IMR-90 (cell line): ENCODE measurements at regions of chrX and their contacts with region 1.

Region 1: DNA sequence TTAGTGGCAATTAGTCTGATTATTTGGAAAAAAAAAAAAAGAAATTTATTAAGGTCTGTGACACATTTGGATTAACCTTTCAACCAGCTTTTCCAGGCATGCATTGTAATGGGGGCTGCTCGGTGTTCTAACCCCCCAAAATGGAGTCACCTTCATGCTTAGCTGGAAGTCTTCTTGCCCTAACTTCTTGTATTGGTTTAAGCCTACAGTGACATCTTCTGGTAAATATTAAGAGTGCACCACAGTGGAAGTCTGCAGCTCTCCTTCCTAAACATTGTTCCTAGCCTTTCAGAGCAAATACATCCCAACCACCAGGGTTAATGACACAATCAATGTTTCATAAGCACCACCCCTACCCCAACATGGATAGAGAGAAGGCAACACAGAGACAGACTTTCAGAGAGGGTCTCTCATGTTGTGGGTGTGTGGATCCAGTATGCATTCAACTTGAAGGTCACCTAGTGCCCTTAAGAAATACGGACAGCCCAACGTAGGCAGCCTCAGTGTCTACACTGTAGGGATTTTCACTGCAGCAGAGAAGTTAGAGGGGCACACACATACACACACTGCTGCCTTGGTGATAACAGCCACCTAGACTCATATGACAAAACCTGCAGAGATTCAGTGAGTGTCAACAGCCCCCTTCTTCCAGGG is 142.9 kb upstream of the MBNL3 start:
- DNase-seq: peak; percentile 40
- ATAC-seq: peak; percentile 89
- H3K4me3 ChIP-seq: no peak overlapping the region
- H3K27ac ChIP-seq: no peak overlapping the region
- H3K4me1 ChIP-seq: no peaks in the 10 kb centered on the region
- H3K27me3 ChIP-seq: peaks cover 22% of the 10 kb centered on the region
- CTCF ChIP-seq: peak; percentile 62
- POLR2A ChIP-seq: no peak
- RAD21 ChIP-seq: peak; percentile 57

Region 2: GRCh38 chrX:131830400-131831184 is 801.1 kb before region 1 on chrX:
- CTCF ChIA-PET with region 1: no interaction called
- POLR2A ChIA-PET with region 1: no interaction called
- dilution Hi-C with region 1: no loop called
- in situ Hi-C with region 1: loop called (anchors 25 kb)
- intact Hi-C with region 1: no loop called
- DNase-seq: peak; percentile 69
- ATAC-seq: peak; percentile 74
- H3K4me3 ChIP-seq: peak overlapping the region; percentile 28
- H3K27ac ChIP-seq: no peak overlapping the region
- H3K4me1 ChIP-seq: no peaks in the 10 kb centered on the region
- H3K27me3 ChIP-seq: peaks cover 9% of the 10 kb centered on the region
- CTCF ChIP-seq: peak; percentile 60
- POLR2A ChIP-seq: no peak
- RAD21 ChIP-seq: peak; percentile 71

Region 3: GRCh38 chrX:131841496-131842410 is 790.0 kb before region 1 on chrX:
- CTCF ChIA-PET with region 1: interaction called, 3 read pairs
- POLR2A ChIA-PET with region 1: no interaction called
- dilution Hi-C with region 1: no loop called
- in situ Hi-C with region 1: loop called (anchors 25 kb)
- intact Hi-C with region 1: loop called (anchors 1 kb)
- DNase-seq: peak; percentile 38
- ATAC-seq: peak; percentile 88
- H3K4me3 ChIP-seq: no peak overlapping the region
- H3K27ac ChIP-seq: no peak overlapping the region
- H3K4me1 ChIP-seq: no peaks in the 10 kb centered on the region
- H3K27me3 ChIP-seq: peaks cover 8% of the 10 kb centered on the region
- CTCF ChIP-seq: peak; percentile 68
- POLR2A ChIP-seq: no peak
- RAD21 ChIP-seq: peak; percentile 73

Region 4: GRCh38 chrX:132092439-132093065 is 539.2 kb before region 1 on chrX:
- CTCF ChIA-PET with region 1: interaction called, 5 read pairs
- POLR2A ChIA-PET with region 1: no interaction called
- dilution Hi-C with region 1: no loop called
- in situ Hi-C with region 1: no loop called
- intact Hi-C with region 1: loop called (anchors 1 kb)
- DNase-seq: peak; percentile 61
- ATAC-seq: peak; percentile 94
- H3K4me3 ChIP-seq: no peak overlapping the region
- H3K27ac ChIP-seq: no peak overlapping the region
- H3K4me1 ChIP-seq: no peaks in the 10 kb centered on the region
- H3K27me3 ChIP-seq: peaks cover 11% of the 10 kb centered on the region
- CTCF ChIP-seq: peak; percentile 67
- POLR2A ChIP-seq: no peak
- RAD21 ChIP-seq: peak; percentile 62

Region 5: GRCh38 chrX:132226169-132226568 is 405.5 kb before region 1 on chrX:
- CTCF ChIA-PET with region 1: no interaction called
- POLR2A ChIA-PET with region 1: interaction called, 4 read pairs
- dilution Hi-C with region 1: no loop called
- in situ Hi-C with region 1: loop called (anchors 10 kb)
- intact Hi-C with region 1: loop called (anchors 1 kb)
- DNase-seq: peak; percentile 15
- ATAC-seq: no peak
- H3K4me3 ChIP-seq: no peak overlapping the region
- H3K27ac ChIP-seq: no peak overlapping the region
- H3K4me1 ChIP-seq: peaks cover 2% of the 10 kb centered on the region; the same call in 1 of the 2 replicates
- H3K27me3 ChIP-seq: peaks cover 4% of the 10 kb centered on the region; the same call in 1 of the 2 replicates
- CTCF ChIP-seq: peak; percentile 55
- POLR2A ChIP-seq: no peak
- RAD21 ChIP-seq: peak; percentile 47

Region 6: DNA sequence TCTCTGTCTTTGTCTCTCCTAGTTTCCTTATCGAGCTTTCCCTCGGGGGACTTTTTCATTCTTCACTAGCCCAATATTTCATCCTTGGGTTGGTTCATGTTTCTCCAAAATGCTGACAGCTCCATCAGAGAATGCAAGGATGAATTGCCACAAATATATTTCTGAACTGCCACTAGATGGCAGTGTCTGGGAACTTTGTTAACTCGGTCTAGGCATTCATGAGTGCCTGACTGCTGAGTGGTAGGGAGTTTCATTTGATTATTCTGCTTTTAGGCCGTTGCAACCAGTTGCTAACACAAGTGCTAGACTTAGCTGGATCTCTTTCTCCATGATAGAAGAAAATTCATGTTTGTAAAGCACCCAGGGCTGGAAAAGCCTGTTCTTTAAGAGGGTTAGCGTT is 338.9 kb before region 1 on chrX:
- CTCF ChIA-PET with region 1: no interaction called
- POLR2A ChIA-PET with region 1: no interaction called
- dilution Hi-C with region 1: no loop called
- in situ Hi-C with region 1: loop called (anchors 10 kb)
- intact Hi-C with region 1: loop called (anchors 1 kb)
- DNase-seq: peak; percentile 57
- ATAC-seq: peak; percentile 83
- H3K4me3 ChIP-seq: no peak overlapping the region
- H3K27ac ChIP-seq: no peak overlapping the region
- H3K4me1 ChIP-seq: no peaks in the 10 kb centered on the region
- H3K27me3 ChIP-seq: peaks cover 1% of the 10 kb centered on the region; the same call in 1 of the 2 replicates
- CTCF ChIP-seq: peak; percentile 66
- POLR2A ChIP-seq: no peak
- RAD21 ChIP-seq: peak; percentile 56

Region 7: GRCh38 chrX:133670383-133670782 is 1038.7 kb after region 1 on chrX:
- CTCF ChIA-PET with region 1: no interaction called
- POLR2A ChIA-PET with region 1: no interaction called
- dilution Hi-C with region 1: no loop called
- in situ Hi-C with region 1: no loop called
- intact Hi-C with region 1: loop called (anchors 10 kb)
- DNase-seq: peak; percentile 31
- ATAC-seq: peak; percentile 71
- H3K4me3 ChIP-seq: no peak overlapping the region
- H3K27ac ChIP-seq: no peak overlapping the region
- H3K4me1 ChIP-seq: no peaks in the 10 kb centered on the region
- H3K27me3 ChIP-seq: peaks cover 3% of the 10 kb centered on the region
- CTCF ChIP-seq: peak; percentile 76
- POLR2A ChIP-seq: no peak
- RAD21 ChIP-seq: peak; percentile 82